ENCODE measurements at regions of chr20 and their contacts with region 1.

Region 1: DNA sequence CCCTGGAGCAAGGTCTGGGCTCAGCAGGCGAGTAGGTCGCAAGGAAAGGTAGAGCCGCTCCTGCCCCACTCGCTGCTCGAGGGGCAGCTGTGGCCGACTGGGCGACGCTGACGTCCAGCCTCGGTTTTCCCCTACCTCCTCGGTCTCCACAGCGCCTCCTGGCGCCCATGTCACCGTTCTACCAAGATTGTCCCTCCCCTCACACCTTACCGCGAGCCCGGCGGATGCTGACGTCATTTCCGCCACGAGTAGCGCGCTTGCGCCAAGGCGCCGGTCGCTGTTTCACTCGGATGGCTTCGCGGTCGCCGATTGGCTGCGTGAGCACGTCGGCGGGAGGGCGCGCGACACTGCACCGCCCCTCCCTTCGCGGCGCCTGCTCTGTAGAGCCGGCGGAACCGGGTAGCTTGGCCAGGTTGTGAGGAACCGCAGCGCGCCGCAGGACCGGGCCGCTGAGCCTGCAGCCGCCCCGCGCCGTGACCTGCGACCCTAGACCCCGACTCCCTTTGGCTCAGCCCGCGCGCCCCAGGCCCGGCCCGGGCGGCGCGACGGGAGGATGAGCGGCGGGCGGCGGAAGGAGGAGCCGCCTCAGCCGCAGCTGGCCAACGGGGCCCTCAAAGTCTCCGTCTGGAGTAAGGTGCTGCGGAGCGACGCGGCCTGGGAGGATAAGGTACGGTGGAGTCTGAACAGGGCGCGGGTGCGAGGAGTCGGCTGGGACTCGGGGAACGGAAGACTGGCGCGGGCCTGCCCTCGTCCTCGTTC is at the start of gene RAB5IF:
- DNase-seq: peak; percentile 100
- ATAC-seq: peak; percentile 95
- H3K4me3 Mint-ChIP-seq: peak within 1 kb of the TSS; percentile 98
- H3K27ac Mint-ChIP-seq: peak within 1 kb of the TSS; percentile 98
- H3K4me1 Mint-ChIP-seq: peaks cover 28% of the 10 kb centered on the region
- H3K27me3 Mint-ChIP-seq: no peaks in the 10 kb centered on the region
- total RNA-seq, gene RAB5IF: 108 to 109 TPM

Region 2: GRCh38 chr20:36465109-36466080 is 140.2 kb before region 1 on chr20:
- CTCF ChIA-PET with region 1: interaction called, 10 read pairs
- POLR2A ChIA-PET with region 1: interaction called, 4 read pairs
- DNase-seq: peak; percentile 53
- ATAC-seq: peak; percentile 14
- H3K4me3 Mint-ChIP-seq: peak overlapping the region; percentile 27
- H3K27ac Mint-ChIP-seq: peak overlapping the region; percentile 86
- H3K4me1 Mint-ChIP-seq: peaks cover 77% of the 10 kb centered on the region
- H3K27me3 Mint-ChIP-seq: no peaks in the 10 kb centered on the region

Region 3: DNA sequence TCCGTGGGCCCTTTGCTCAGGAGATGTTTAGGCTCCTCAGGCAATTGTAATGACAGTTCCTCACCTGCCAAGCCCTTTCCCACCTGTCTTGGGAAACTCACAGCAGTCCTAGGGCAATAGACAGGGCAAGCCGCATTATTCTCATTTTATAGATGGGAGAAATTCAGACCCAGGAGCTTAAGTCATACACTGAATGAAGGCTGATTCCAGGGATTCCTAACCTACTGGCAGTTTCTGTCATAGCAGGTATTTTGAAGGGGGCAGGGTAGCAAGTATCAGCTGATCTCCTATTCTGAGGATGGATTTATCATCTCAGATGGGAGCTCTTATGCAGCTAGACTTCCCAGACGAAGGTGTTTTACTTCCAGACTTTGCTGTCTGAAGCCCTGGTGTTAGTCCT is 125.6 kb before region 1 on chr20:
- CTCF ChIA-PET with region 1: no interaction called
- POLR2A ChIA-PET with region 1: no interaction called
- DNase-seq: no peak
- ATAC-seq: no peak
- H3K4me3 Mint-ChIP-seq: no peak overlapping the region
- H3K27ac Mint-ChIP-seq: no peak overlapping the region
- H3K4me1 Mint-ChIP-seq: peaks cover 3% of the 10 kb centered on the region
- H3K27me3 Mint-ChIP-seq: no peaks in the 10 kb centered on the region

Region 4: DNA sequence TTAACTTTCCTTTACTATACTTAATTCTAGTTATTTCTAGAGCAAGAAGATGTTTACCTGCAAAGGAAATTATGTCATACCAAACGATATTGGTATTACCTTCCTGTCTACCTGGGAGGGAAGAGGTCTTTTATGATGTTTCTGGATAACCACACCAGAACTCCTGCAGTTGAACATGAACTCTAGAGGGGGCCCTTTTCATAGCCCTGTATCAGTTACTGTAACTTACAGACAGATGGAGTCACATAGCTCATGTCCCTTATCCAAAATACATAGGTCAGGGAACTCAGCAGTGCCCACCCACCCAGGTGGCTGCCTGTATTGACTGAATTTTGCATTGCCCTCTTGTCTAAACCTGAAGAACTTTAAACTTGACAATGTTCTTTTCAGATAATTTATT is 99.3 kb before region 1 on chr20:
- CTCF ChIA-PET with region 1: interaction called, 15 read pairs
- POLR2A ChIA-PET with region 1: no interaction called
- DNase-seq: peak; percentile 31
- ATAC-seq: peak; percentile 88
- H3K4me3 Mint-ChIP-seq: no peak overlapping the region
- H3K27ac Mint-ChIP-seq: no peak overlapping the region
- H3K4me1 Mint-ChIP-seq: peaks cover 6% of the 10 kb centered on the region
- H3K27me3 Mint-ChIP-seq: no peaks in the 10 kb centered on the region

Region 5: GRCh38 chr20:36573103-36573794 is 32.3 kb before region 1 on chr20 and contains the start of gene TGIF2:
- CTCF ChIA-PET with region 1: interaction called, 44 read pairs
- POLR2A ChIA-PET with region 1: interaction called, 70 read pairs
- DNase-seq: peak; percentile 93
- ATAC-seq: peak; percentile 76
- H3K4me3 Mint-ChIP-seq: peak within 1 kb of the TSS; percentile 87
- H3K27ac Mint-ChIP-seq: peak within 1 kb of the TSS; percentile 98
- H3K4me1 Mint-ChIP-seq: peaks cover 40% of the 10 kb centered on the region
- H3K27me3 Mint-ChIP-seq: no peaks in the 10 kb centered on the region
- total RNA-seq, gene TGIF2: 29.2 to 32.9 TPM